PC-9 (cell line): ENCODE measurements at regions of chr3 and their contacts with region 1.

Region 1: DNA sequence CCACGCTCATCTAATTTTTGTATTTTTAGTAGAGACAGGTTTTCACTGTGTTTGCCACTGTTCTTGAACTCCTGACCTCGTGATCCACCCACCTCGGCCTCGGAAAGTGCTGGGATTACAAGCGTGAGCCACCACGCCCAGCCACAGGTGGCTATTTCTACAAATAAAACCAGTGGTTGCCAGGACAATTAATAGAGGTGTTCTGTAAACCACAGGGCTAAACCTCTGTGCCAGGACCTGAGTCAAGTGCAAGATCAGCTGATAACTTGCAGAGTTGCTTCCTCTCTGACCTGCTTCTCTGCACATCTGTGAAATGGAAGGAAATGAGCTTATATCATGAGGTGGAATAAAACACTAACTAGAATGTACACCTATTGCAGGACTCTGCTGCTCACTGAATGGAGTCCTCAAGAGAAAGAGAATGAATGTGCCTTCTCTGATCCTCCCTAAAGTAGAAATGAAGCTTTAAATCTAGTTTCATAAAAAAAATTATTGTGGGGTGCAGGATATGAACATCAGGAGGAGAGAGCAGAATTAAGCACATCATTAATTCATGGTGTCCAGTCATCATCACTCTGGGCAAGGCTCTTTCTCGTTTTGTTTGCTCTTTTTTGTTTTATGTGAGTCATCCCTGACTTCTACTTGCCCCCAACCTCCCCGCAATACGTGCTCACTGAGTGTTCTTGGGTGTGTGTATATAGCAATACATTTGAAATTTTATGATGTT is 72.6 kb downstream of the CD200R1L start:
- DNase-seq: peak; percentile 88 to 96
- H3K4me3 ChIP-seq: no peak overlapping the region
- H3K27ac ChIP-seq: peak overlapping the region; percentile 88
- H3K4me1 ChIP-seq: peaks cover 80% of the 10 kb centered on the region
- H3K27me3 ChIP-seq: no peaks in the 10 kb centered on the region
- CTCF ChIP-seq: no peak

Region 2: DNA sequence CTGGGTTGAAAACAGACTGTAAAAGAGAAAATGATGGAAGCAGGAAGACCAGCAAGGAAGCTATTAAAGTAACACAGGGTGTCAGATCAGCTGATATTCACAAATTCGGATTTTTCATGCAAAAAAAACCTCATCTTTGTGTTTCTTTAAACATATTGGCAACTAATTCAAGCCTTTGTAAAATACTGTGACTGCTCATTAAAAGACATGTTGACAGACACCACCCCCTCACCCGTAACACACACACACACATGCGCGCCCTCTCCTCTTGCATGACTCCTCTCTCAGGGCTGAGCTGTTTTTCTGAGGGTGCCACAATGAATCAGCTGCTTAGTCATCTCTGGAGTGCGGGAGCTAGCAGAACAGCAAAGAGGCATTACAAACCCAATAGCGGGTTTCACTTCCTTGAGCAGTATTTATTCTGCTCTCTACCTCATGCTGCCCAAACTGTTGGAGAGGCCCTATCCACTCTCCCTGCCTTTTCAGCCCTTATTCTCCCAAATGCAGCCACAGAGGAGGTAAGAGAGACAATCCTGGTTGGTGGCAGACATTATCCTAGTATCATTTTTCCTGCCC is 97.3 kb before region 1 on chr3:
- CTCF ChIA-PET with region 1: no interaction called
- POLR2A ChIA-PET with region 1: interaction called, 17 read pairs
- intact Hi-C with region 1: loop called (anchors 1 kb)
- DNase-seq: peak; percentile 53 to 86
- H3K4me3 ChIP-seq: no peak overlapping the region
- H3K27ac ChIP-seq: peak overlapping the region; percentile 87
- H3K4me1 ChIP-seq: peaks cover 57% of the 10 kb centered on the region
- H3K27me3 ChIP-seq: no peaks in the 10 kb centered on the region
- CTCF ChIP-seq: no peak

Region 3: GRCh38 chr3:112744106-112744505 is 29.9 kb before region 1 on chr3:
- CTCF ChIA-PET with region 1: interaction called, 11 read pairs
- POLR2A ChIA-PET with region 1: interaction called, 5 read pairs
- intact Hi-C with region 1: no loop called
- DNase-seq: no peak
- H3K4me3 ChIP-seq: no peak overlapping the region
- H3K27ac ChIP-seq: no peak overlapping the region
- H3K4me1 ChIP-seq: peaks cover 37% of the 10 kb centered on the region
- H3K27me3 ChIP-seq: no peaks in the 10 kb centered on the region
- CTCF ChIP-seq: no peak

Region 4: GRCh38 chr3:112761062-112761638 is 12.9 kb before region 1 on chr3:
- CTCF ChIA-PET with region 1: no interaction called
- POLR2A ChIA-PET with region 1: interaction called, 17 read pairs
- intact Hi-C with region 1: no loop called
- DNase-seq: no peak
- H3K4me3 ChIP-seq: no peak overlapping the region
- H3K27ac ChIP-seq: no peak overlapping the region
- H3K4me1 ChIP-seq: peaks cover 11% of the 10 kb centered on the region; the same call in 1 of the 2 replicates
- H3K27me3 ChIP-seq: no peaks in the 10 kb centered on the region
- CTCF ChIP-seq: no peak

Region 5: GRCh38 chr3:112814266-112814665 is 40.2 kb after region 1 on chr3:
- CTCF ChIA-PET with region 1: interaction called, 3 read pairs
- POLR2A ChIA-PET with region 1: interaction called, 15 read pairs
- intact Hi-C with region 1: loop called (anchors 1 kb)
- DNase-seq: peak; percentile 15 to 68
- H3K4me3 ChIP-seq: no peak overlapping the region
- H3K27ac ChIP-seq: peak overlapping the region; percentile 39
- H3K4me1 ChIP-seq: peaks cover 33% of the 10 kb centered on the region
- H3K27me3 ChIP-seq: no peaks in the 10 kb centered on the region
- CTCF ChIP-seq: peak; percentile 73

Region 6: GRCh38 chr3:112973325-112974177 is 199.5 kb after region 1 on chr3:
- CTCF ChIA-PET with region 1: no interaction called
- POLR2A ChIA-PET with region 1: no interaction called
- intact Hi-C with region 1: no loop called
- DNase-seq: no peak
- H3K4me3 ChIP-seq: no peak overlapping the region
- H3K27ac ChIP-seq: no peak overlapping the region
- H3K4me1 ChIP-seq: no peaks in the 10 kb centered on the region
- H3K27me3 ChIP-seq: no peaks in the 10 kb centered on the region
- CTCF ChIP-seq: no peak

Region 7: GRCh38 chr3:113468539-113468938 is 694.5 kb after region 1 on chr3:
- CTCF ChIA-PET with region 1: no interaction called
- POLR2A ChIA-PET with region 1: interaction called, 10 read pairs
- intact Hi-C with region 1: no loop called
- DNase-seq: no peak
- H3K4me3 ChIP-seq: no peak overlapping the region
- H3K27ac ChIP-seq: no peak overlapping the region
- H3K4me1 ChIP-seq: no peaks in the 10 kb centered on the region
- H3K27me3 ChIP-seq: no peaks in the 10 kb centered on the region
- CTCF ChIP-seq: no peak